HepG2 (cell line): ENCODE measurements at regions of chr2 and their contacts with region 1.

Region 1: DNA sequence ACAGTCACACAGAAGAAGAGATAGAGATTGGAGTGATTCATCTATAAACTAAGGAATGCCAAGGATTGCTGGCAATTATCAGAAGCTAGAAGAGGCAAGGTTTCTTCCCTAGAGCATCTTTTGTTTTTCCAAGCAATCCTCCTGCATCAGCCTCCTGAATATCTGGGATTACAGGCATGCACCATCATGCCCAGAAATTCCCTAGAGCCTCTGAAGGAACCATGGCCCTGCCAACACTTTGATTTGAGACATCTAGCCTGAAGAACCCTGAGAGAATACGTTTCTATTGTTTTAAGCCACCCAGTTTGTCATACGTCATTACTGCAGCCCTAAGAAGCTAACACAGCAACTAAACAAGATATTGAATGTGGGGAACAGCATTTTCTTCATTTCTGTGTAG is 525.0 kb downstream of the ERBB4 start:
- DNase-seq: no peak
- ATAC-seq: no peak
- H3K4me3 ChIP-seq: no peak overlapping the region
- H3K27ac ChIP-seq: no peak overlapping the region
- H3K4me1 ChIP-seq: no peaks in the 10 kb centered on the region
- H3K27me3 ChIP-seq: no peaks in the 10 kb centered on the region
- CTCF ChIP-seq: no peak
- EP300 ChIP-seq: no peak
- POLR2A ChIP-seq: no peak
- RAD21 ChIP-seq: no peak

Region 2: DNA sequence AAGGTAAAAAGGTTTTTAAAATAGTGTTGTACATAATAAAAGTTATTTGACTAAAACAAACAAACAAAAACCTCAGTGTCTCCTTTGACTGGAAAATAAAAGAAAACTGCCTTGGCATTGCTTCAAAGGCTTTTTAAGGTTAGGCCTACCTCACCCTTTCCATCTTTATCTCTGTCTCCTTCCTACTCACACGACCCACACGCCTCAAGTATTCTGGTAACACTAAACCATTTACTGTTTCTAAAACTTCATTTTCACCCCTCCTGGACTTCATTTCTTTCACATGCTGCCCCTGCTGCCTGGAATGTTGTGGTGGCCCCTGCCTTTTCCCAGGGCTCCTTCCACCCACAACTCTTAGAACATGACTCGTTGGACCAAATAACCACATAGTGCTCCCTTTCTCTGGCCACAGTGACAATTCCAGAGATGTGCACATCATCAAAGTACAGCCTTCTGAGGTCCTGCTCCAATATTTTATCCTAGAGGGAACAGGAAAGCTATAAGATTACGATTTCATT is 471.0 kb after region 1 on chr2:
- CTCF ChIA-PET with region 1: no interaction called
- POLR2A ChIA-PET with region 1: no interaction called
- in situ Hi-C with region 1: no loop called
- intact Hi-C with region 1: no loop called
- DNase-seq: no peak
- ATAC-seq: no peak
- H3K4me3 ChIP-seq: no peak overlapping the region
- H3K27ac ChIP-seq: no peak overlapping the region
- H3K4me1 ChIP-seq: no peaks in the 10 kb centered on the region
- H3K27me3 ChIP-seq: no peaks in the 10 kb centered on the region
- CTCF ChIP-seq: no peak
- EP300 ChIP-seq: no peak
- POLR2A ChIP-seq: no peak
- RAD21 ChIP-seq: no peak

Region 3: DNA sequence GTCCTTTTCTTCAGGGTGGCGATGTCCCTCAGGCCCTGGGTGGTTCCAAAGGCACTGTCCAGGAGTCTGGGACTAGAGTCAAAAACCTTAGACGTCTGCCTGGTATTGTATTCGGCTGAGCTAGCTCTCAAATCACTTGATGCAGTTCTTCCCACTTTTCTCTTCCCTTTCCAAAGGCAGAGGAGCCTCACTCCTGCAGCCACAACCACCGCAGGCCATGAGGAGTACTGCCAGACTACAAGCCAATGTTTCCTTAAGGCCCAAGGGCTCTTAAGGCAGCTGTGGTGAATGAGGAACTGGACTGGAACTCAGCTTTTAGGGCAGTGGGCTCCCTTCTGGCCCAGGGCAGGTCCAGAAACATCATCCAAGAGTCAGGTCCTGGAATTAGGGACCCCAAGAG is 1631.3 kb after region 1 on chr2:
- CTCF ChIA-PET with region 1: no interaction called
- POLR2A ChIA-PET with region 1: no interaction called
- in situ Hi-C with region 1: no loop called
- intact Hi-C with region 1: loop called (anchors 10 kb)
- DNase-seq: no peak
- ATAC-seq: no peak
- H3K4me3 ChIP-seq: no peak overlapping the region
- H3K27ac ChIP-seq: no peak overlapping the region
- H3K4me1 ChIP-seq: no peaks in the 10 kb centered on the region
- H3K27me3 ChIP-seq: no peaks in the 10 kb centered on the region
- CTCF ChIP-seq: no peak
- EP300 ChIP-seq: no peak
- POLR2A ChIP-seq: no peak
- RAD21 ChIP-seq: no peak